ENCODE measurements at regions of chr9 and their contacts with region 1.

Region 1: GRCh38 chr9:123349691-123350480 is 6.1 kb upstream of the CRB2 start:
- DNase-seq: peak in 6 of 10 donors; percentile 52 to 93 (median 66)

Region 2: DNA sequence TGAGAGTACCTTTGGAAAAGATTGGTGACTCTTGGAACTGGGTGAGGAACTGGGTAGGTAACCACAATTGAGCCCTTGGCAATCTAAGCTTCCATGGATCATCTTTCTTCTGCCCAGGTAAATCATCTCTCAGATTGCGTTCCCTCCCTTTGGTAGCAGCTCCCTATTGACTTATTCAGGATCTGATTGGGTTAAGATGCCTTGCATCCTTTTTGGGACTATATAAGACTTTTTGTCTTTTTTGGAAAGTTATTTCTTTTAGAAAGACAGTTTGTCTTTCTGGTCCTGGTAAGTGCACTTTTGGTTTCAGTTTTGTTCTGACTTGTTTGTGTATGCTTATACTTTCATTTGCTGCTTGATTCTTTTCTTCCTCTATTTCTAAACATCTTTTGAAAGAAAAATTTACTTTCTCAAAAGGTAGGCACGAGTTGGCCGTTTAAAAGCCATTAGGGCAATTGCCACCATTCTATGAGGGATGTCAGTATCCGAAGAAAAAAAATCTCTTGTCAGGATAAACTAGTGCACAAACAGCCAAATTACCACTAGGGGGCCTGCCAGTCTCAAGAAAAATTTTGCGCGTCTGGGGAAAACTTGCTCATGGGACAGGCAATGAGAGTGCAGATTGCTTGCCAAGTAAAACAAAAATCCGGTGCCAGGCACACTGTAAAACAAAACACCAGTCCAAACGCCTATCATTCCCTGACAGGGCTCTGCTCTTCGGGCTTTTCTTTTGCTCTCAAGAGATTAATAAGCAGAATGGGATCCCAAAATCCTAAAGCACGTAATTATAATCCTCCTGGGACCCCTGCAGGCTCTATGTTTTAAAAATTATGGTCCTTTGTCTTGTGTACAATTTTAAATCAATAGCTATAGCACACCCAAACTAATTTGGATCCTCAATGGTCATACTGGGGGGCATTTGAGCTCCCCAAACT is 885.0 kb before region 1 on chr9:
- intact Hi-C with region 1: loop called (anchors 1 kb)
- DNase-seq: peak; percentile 40 to 93 (median 70)

Region 3: DNA sequence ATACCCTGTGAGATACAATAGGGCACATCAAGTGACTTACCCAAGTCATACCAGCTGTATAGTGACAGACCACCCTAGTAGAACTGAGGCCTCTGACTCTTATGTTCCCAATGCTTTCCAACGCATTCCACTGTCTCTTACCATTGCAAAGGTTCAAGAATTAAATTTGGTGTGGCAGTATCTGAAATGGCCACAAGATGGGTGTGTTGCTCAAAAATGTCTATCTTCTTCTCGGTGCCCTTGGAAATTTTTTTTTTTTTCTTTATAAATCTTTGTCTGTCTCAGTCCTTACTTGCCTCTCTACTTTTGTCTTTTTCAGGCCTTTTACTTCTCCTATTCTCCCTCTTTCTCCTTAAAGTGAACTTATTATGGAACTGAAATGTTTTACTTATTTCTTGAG is 268.1 kb before region 1 on chr9:
- intact Hi-C with region 1: loop called (anchors 5 kb)
- DNase-seq: no peak

Region 4: DNA sequence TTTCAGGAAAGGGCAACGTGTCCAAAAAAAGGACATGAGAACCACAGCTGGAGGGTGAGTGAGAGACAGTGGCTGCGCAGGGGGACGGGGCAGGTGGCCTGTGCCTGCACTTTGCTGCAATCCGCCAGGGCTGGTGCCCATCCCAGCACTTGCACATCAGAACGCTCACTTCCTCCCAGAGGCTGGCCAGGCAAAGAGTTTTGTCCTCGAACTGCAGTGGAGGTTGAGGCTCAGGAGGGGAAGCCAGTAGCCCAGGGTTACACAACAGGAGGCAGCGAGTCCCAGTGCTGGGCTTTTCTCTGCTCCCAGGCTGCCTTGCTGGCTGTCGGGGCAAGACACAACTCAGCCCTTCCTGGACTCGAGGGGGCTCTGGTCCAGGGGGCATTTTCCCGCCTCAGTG is 39.2 kb after region 1 on chr9:
- intact Hi-C with region 1: loop called (anchors 1 kb)
- DNase-seq: no peak